ENCODE measurements at regions of chr6 and their contacts with region 1.

Region 1: GRCh38 chr6:4906293-4907276 is 97.3 kb downstream of the RPP40 start:
- DNase-seq: peak; percentile 43
- CTCF ChIP-seq: no peak

Region 2: GRCh38 chr6:4870821-4871494 is 35.6 kb before region 1 on chr6:
- CTCF ChIA-PET with region 1: no interaction called
- POLR2A ChIA-PET with region 1: no interaction called
- DNase-seq: no peak
- CTCF ChIP-seq: no peak

Region 3: GRCh38 chr6:4896401-4896800 is 10.2 kb before region 1 on chr6:
- CTCF ChIA-PET with region 1: interaction called, 10 read pairs
- POLR2A ChIA-PET with region 1: no interaction called
- DNase-seq: no peak
- CTCF ChIP-seq: no peak

Region 4: GRCh38 chr6:4916954-4917561 is 10.5 kb after region 1 on chr6:
- CTCF ChIA-PET with region 1: interaction called, 10 read pairs
- POLR2A ChIA-PET with region 1: no interaction called
- DNase-seq: no peak
- CTCF ChIP-seq: no peak

Region 5: DNA sequence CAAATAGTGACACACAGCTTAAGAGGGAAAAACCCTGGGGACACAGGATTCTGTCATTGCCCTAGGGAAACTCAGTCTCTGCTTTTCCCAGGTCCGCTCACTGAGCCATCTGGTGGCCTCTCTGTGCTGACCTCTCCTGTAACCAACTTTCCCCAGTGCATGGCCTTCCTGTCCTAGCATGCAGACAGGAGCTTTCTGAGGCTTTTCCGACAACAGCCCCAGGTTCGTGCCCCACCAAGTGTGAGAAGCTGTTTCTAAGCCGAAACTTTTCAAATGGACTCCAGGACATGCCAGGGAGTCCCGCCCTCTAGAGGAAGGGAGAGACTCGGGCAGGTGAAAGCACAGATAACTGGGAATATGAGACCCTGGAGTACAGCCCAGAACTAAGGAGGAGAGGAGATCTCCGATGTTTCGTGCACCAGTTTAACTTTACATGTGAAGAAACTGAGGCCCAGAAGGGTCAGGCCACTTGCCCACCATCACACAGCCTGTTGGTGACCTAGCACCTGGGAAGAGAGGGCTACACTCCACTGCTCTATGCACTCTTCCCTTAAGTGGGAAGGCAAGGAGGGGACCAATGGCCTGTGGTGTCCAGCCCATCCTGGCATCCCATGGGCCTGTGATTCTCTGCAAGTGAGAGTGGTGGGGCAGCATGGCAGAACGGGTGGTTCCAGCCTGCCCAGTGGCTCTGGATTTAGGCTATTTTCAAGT is 51.1 kb after region 1 on chr6:
- CTCF ChIA-PET with region 1: no interaction called
- POLR2A ChIA-PET with region 1: no interaction called
- DNase-seq: no peak
- CTCF ChIP-seq: no peak